Psoas muscle (tissue), 8 donors: ENCODE measurements at regions of chr5 and their contacts with region 1.

Region 1: GRCh38 chr5:138352071-138352721 is at the start of gene KDM3B:
- DNase-seq: peak; percentile 86 to 92
- ATAC-seq: peak; percentile 85 to 91 (median 89)
- H3K4me3 ChIP-seq: peak within 1 kb of the TSS; percentile 96
- H3K27ac ChIP-seq: peak within 1 kb of the TSS; percentile 93
- H3K4me1 ChIP-seq: peaks cover 42% of the 10 kb centered on the region
- H3K27me3 ChIP-seq: no peaks in the 10 kb centered on the region
- CTCF ChIP-seq: peak; percentile 96
- total RNA-seq, gene KDM3B: 49.0 to 58.3 (median 54.1) TPM

Region 2: DNA sequence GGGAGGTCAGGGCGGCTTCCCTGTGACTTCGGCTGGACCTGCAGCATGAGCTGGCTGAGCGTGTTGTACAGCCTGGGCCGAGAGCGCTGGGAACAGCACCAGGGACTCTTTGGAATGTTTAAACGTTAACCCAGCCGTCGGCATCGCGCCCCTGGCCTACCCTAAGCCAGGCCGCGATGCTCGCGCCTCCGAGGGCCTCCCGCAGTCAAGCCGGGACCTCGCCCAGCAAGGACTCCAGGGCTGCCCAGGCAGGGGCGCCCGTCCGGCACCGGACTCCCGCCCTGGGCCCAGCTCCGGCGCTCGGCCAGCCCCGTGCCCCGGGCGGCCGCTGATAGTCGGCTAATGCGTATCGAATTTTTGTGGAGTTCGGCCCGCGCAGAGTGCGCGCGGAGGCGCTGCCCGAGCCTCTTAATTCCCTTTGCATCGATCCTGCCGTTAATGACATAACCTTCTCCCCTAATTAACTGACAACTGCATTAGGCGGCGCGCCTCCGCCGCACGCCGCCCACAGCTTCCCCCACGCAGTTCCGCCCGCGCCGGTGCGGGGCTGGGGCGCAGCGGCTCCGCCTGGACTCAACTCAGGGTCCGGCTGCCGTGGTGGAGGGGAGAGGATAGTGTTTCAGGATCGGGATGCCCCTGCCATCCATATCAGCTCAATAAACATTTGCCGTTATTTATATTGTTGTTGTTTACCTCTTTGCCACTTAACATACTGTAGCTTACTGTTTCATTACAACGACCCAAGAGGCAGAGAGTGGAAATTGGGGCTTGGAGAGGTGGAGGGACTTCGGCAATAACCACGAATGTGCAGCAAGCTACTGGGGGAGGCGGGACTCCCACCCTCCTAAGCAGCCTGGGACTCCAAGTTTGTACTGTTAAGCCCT is 110.3 kb before region 1 on chr5:
- intact Hi-C with region 1: no loop called
- DNase-seq: peak; percentile 22 to 57
- ATAC-seq: peak; percentile 64 to 92 (median 80)
- H3K4me3 ChIP-seq: peak overlapping the region; percentile 75
- H3K27ac ChIP-seq: peak overlapping the region; percentile 16
- H3K4me1 ChIP-seq: peaks cover 3% of the 10 kb centered on the region
- H3K27me3 ChIP-seq: no peaks in the 10 kb centered on the region
- CTCF ChIP-seq: no peak

Region 3: GRCh38 chr5:138337685-138338410 is 14.3 kb before region 1 on chr5 and contains the start of gene FAM53C:
- intact Hi-C with region 1: loop called in 1 of 2 experiments (anchors 1 kb)
- DNase-seq: peak; percentile 92 to 97
- ATAC-seq: peak; percentile 93 to 95 (median 94)
- H3K4me3 ChIP-seq: peak within 1 kb of the TSS; percentile 73
- H3K27ac ChIP-seq: peak within 1 kb of the TSS; percentile 99
- H3K4me1 ChIP-seq: peaks cover 22% of the 10 kb centered on the region
- H3K27me3 ChIP-seq: no peaks in the 10 kb centered on the region
- CTCF ChIP-seq: peak; percentile 3
- total RNA-seq, gene FAM53C: 35.9 to 57.6 (median 36.9) TPM

Region 4: DNA sequence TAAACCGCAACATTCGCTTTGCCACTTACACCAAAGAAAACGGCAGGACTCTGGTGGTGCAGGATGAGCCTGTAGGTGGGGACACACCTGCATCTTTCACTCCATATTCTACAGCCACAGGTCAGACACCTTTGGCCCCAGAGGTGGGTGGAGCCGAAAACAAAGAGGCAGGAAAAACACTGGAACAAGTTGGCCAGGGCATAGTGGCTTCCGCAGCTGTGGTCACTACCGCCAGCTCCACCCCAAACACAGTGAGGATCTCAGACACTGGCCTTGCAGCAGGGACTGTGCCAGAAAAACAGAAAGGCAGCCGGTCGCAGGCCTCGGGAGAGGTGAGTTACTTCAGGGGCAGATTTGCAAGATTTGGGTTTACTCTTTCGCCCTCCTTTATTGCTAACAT is 34.1 kb after region 1 on chr5:
- intact Hi-C with region 1: loop called in 1 of 2 experiments (anchors 5 kb)
- DNase-seq: no peak
- ATAC-seq: peak; percentile 34 to 54 (median 37)
- H3K4me3 ChIP-seq: peak overlapping the region; percentile 42
- H3K27ac ChIP-seq: peak overlapping the region; percentile 70
- H3K4me1 ChIP-seq: peaks cover 26% of the 10 kb centered on the region
- H3K27me3 ChIP-seq: no peaks in the 10 kb centered on the region
- CTCF ChIP-seq: no peak

Region 5: DNA sequence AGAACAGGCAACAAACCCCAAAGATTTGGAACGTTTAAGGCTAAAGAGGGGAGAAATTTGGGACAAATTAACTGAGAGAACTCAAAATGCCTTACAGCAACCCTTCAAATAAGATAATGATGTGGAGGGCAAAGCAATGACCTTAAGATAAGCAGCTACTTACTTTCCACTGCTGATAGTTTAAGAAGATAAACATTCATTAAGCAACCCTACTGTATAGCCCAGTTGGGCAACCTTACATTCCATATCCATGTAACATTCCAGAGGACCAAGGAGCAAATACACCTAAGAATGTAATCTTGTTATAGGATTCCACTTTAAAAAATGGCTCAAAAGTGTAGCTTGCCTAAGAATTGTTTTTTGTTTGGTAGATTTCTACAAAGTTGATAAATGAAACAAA is 176.0 kb after region 1 on chr5:
- intact Hi-C with region 1: no loop called
- DNase-seq: no peak
- ATAC-seq: no peak
- H3K4me3 ChIP-seq: no peak overlapping the region
- H3K27ac ChIP-seq: no peak overlapping the region
- H3K4me1 ChIP-seq: peaks cover 12% of the 10 kb centered on the region
- H3K27me3 ChIP-seq: no peaks in the 10 kb centered on the region
- CTCF ChIP-seq: no peak